ENCODE measurements at regions of chr5 and their contacts with region 1.

Region 1: GRCh38 chr5:115601701-115602590 is at the start of gene TICAM2:
- DNase-seq: peak; percentile 67
- ATAC-seq: peak; percentile 83
- H3K4me3 ChIP-seq: peak within 1 kb of the TSS; percentile 94
- H3K27ac ChIP-seq: peak within 1 kb of the TSS; percentile 95
- H3K4me1 ChIP-seq: peaks cover 6% of the 10 kb centered on the region
- H3K27me3 ChIP-seq: no peaks in the 10 kb centered on the region
- CTCF ChIP-seq: peak; percentile 17; the same call in 1 of the 2 replicates
- POLR2A ChIP-seq: peak; percentile 53; the same call in 1 of the 2 replicates
- RAD21 ChIP-seq: no peak
- total RNA-seq, gene TICAM2: 4.3 and 6.9 TPM in 2 replicates

Region 2: GRCh38 chr5:114237766-114238165 is 1364.2 kb before region 1 on chr5:
- CTCF ChIA-PET with region 1: no interaction called
- POLR2A ChIA-PET with region 1: no interaction called
- dilution Hi-C with region 1: no loop called
- in situ Hi-C with region 1: loop called (anchors 25 kb)
- intact Hi-C with region 1: no loop called
- DNase-seq: peak; percentile 99
- ATAC-seq: peak; percentile 82
- H3K4me3 ChIP-seq: no peak overlapping the region
- H3K27ac ChIP-seq: no peak overlapping the region
- H3K4me1 ChIP-seq: peaks cover 4% of the 10 kb centered on the region; the same call in 1 of the 2 replicates
- H3K27me3 ChIP-seq: no peaks in the 10 kb centered on the region
- CTCF ChIP-seq: no peak
- POLR2A ChIP-seq: peak; percentile 52; the same call in 1 of the 2 replicates
- RAD21 ChIP-seq: no peak; the same call in 1 of the 2 replicates

Region 3: DNA sequence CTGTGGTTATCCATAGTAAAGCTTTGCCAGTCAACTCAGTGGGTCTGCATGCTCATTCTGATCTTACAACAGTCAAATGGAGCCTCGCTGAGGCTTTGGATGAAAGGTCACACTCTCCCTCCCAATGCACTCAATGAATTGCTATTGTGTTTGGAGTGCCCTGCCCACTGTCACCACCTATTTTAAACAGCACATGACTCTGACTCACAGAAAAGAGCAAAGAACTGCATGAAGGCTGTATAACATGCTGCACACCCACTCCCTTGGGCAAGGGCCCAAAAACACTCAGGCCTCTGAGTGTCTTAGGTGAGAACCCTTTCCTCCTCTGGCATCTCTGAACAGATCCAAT is 186.8 kb before region 1 on chr5:
- CTCF ChIA-PET with region 1: no interaction called
- POLR2A ChIA-PET with region 1: no interaction called
- dilution Hi-C with region 1: no loop called
- in situ Hi-C with region 1: no loop called
- intact Hi-C with region 1: no loop called
- DNase-seq: peak; percentile 82
- ATAC-seq: peak; percentile 43
- H3K4me3 ChIP-seq: no peak overlapping the region
- H3K27ac ChIP-seq: peak overlapping the region; percentile 7; the same call in 1 of the 2 replicates
- H3K4me1 ChIP-seq: peaks cover 12% of the 10 kb centered on the region
- H3K27me3 ChIP-seq: no peaks in the 10 kb centered on the region
- CTCF ChIP-seq: no peak
- POLR2A ChIP-seq: no peak
- RAD21 ChIP-seq: no peak; the same call in 1 of the 2 replicates

Region 4: DNA sequence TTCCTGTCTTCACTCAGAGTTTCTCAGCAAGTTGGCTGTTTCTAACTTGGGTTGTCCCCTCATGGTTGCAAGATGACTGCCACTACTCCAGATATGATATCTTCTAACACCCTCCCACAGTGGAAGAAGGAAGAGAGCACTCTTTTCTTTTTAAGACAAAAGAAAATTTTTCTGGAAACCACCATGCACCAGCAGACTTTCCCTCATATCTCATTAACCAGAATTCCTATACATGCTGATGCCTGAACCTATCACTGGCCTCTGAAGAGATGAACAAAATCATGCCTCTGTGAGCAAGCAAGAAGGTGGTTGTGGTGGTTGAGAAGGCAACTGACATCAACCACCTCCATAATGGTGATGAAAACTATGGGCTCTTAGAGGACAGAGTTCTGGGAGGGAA is 114.2 kb before region 1 on chr5:
- CTCF ChIA-PET with region 1: no interaction called
- POLR2A ChIA-PET with region 1: no interaction called
- dilution Hi-C with region 1: no loop called
- in situ Hi-C with region 1: no loop called
- intact Hi-C with region 1: no loop called
- DNase-seq: no peak
- ATAC-seq: no peak
- H3K4me3 ChIP-seq: no peak overlapping the region
- H3K27ac ChIP-seq: no peak overlapping the region
- H3K4me1 ChIP-seq: no peaks in the 10 kb centered on the region
- H3K27me3 ChIP-seq: no peaks in the 10 kb centered on the region; the same call in 1 of the 2 replicates
- CTCF ChIP-seq: no peak
- POLR2A ChIP-seq: no peak
- RAD21 ChIP-seq: no peak

Region 5: DNA sequence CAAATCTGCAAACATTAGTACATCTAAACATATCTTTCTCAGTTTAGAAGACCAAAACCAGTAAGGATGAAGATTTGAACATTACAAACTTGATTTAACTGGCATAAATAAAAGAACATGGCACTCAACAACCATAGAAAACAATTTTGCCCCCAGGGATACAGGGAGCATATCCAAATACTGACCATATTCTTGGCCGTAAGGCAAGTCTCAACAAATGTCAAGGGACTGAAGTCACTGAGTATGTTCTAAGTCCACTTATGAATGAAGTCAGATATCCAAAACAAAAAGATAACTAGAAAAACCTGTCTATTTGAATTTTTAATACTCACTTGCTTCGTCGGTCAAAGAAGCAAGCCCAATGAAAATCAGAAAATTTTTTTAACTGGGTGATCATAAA is 71.5 kb before region 1 on chr5:
- CTCF ChIA-PET with region 1: no interaction called
- POLR2A ChIA-PET with region 1: interaction called, 18 read pairs
- dilution Hi-C with region 1: no loop called
- in situ Hi-C with region 1: no loop called
- intact Hi-C with region 1: no loop called
- DNase-seq: no peak
- ATAC-seq: no peak
- H3K4me3 ChIP-seq: no peak overlapping the region
- H3K27ac ChIP-seq: no peak overlapping the region
- H3K4me1 ChIP-seq: peaks cover 4% of the 10 kb centered on the region
- H3K27me3 ChIP-seq: no peaks in the 10 kb centered on the region
- CTCF ChIP-seq: no peak
- POLR2A ChIP-seq: no peak
- RAD21 ChIP-seq: no peak

Measured in IMR-90 (cell line).